ENCODE measurements at regions of chr21 and their contacts with region 1.

Region 1: GRCh38 chr21:15826147-15826780 is 96.5 kb downstream of the USP25 start:
- DNase-seq: no peak

Region 2: DNA sequence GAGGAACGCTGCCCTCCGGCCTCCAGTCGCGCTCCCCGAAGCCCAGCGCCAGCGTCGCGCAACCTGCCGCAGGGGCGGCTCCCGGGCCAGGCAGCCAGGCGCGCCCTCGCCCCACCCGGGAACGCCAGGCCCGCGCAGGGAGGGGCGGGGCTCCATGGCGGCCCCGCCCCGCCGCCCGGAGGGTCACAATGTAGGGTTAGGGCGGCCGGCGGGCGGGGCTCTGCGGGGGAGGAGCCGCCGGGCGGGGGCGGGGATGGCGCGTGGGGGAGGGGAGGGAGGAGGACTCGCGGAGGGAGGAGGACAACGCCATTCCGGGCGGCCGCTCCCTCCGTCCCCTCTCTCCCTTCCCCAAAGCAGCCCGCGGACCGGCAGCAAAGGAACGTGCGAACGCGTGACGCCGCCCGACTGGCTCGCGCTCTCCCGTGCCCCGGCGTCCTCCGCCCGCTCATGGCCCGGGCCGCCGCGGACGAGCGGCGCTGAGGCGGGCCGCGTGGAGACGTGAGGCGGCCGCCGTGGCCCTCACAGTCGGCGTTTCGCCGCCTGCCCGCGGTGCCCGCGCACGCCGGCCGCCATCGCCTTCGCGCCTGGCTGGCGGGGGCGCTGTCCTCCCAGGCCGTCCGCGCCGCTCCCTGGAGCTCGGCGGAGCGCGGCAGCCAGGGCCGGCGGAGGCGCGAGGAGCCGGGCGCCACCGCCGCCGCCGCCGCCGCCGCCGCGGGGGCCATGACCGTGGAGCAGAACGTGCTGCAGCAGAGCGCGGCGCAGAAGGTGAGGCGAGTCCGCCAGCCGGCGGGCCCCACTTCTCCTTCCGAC is 96.4 kb before region 1 on chr21 and contains the start of gene USP25:
- intact Hi-C with region 1: loop called (anchors 5 kb)
- DNase-seq: peak; percentile 97
- total RNA-seq, gene USP25: 45.7 TPM

Measured in cardiac septum (tissue), 1 donor.